ENCODE measurements at regions of chr13 and their contacts with region 1.

Region 1: GRCh38 chr13:49110122-49110912 is 109.8 kb upstream of the MLNR start:
- DNase-seq: peak; percentile 81 to 93 (median 84)
- ATAC-seq: peak; percentile 81 to 89 (median 82)
- H3K4me3 ChIP-seq: peak overlapping the region; percentile 15 to 75 (median 63)
- H3K27ac ChIP-seq: peak overlapping the region; percentile 3 to 79 (median 50)
- H3K4me1 ChIP-seq: peaks cover 3 to 58% (median 30%) of the 10 kb centered on the region in 12 donors
- H3K27me3 ChIP-seq: no peaks in the 10 kb centered on the region
- CTCF ChIP-seq: no peak
- POLR2A ChIP-seq: no peak

Region 2: GRCh38 chr13:48585456-48585840 is 524.9 kb before region 1 on chr13:
- intact Hi-C with region 1: no loop called
- DNase-seq: peak in 2 of 5 donors; percentile 28 to 46
- ATAC-seq: peak; percentile 50 to 80 (median 73)
- H3K4me3 ChIP-seq: no peak overlapping the region
- H3K27ac ChIP-seq: peak overlapping the region in 11 of 12 donors; percentile 12 to 63 (median 43)
- H3K4me1 ChIP-seq: peaks cover 0 to 42% (median 30%) of the 10 kb centered on the region in 12 donors
- H3K27me3 ChIP-seq: no peaks in the 10 kb centered on the region
- CTCF ChIP-seq: no peak
- POLR2A ChIP-seq: no peak

Region 3: GRCh38 chr13:49256841-49257240 is 146.5 kb after region 1 on chr13:
- intact Hi-C with region 1: loop called in 2 of 10 experiments (anchors 10 kb)
- DNase-seq: no peak
- ATAC-seq: no peak
- H3K4me3 ChIP-seq: no peak overlapping the region
- H3K27ac ChIP-seq: peak overlapping the region in 1 of 12 donors; percentile 9
- H3K4me1 ChIP-seq: peaks cover 0 to 24% (median 0%) of the 10 kb centered on the region in 12 donors
- H3K27me3 ChIP-seq: no peaks in the 10 kb centered on the region
- CTCF ChIP-seq: no peak
- POLR2A ChIP-seq: no peak

Region 4: DNA sequence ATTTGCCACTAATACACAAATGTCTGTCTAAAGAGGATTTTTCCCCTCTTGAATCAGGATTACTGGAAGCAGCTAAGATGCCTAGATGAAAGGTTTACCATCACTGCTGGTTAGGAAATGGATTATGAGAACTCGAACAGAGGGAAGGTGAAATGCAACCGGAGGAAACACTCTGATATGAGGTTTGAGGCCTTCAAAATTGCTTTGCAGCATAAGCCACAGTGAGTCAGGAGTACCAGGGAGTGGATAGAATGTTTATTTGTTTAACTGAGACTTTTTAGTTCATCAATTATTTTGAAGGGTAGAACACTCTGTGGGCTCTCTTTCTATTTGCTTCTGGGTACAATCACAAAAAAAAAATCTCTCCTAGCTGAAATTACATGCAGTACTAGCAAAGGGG is 155.5 kb after region 1 on chr13:
- intact Hi-C with region 1: loop called in 1 of 10 experiments (anchors 10 kb)
- DNase-seq: no peak
- ATAC-seq: no peak
- H3K4me3 ChIP-seq: no peak overlapping the region
- H3K27ac ChIP-seq: no peak overlapping the region
- H3K4me1 ChIP-seq: no peaks in the 10 kb centered on the region
- H3K27me3 ChIP-seq: no peaks in the 10 kb centered on the region
- CTCF ChIP-seq: no peak
- POLR2A ChIP-seq: no peak

Region 5: DNA sequence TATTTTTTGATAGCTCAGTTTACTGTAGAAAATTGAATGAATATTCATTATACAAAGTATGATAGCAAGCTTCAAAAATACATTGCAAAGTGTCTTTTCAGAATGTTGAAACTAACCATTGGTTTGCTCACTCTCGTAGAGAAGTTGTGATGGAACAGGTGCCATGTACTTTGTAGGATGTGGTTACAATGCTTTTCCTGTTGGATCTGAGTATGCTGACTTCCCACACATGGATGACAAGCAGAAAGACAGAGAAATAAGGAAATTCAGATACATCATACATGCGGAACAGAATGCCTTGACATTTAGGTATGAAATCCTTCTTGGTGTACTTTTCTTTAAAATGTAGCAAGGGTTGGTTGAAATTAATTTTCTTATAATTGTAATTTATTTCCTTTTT is 167.9 kb after region 1 on chr13:
- intact Hi-C with region 1: loop called in 2 of 10 experiments (anchors 5 to 10 kb)
- DNase-seq: no peak
- ATAC-seq: no peak
- H3K4me3 ChIP-seq: no peak overlapping the region
- H3K27ac ChIP-seq: no peak overlapping the region
- H3K4me1 ChIP-seq: no peaks in the 10 kb centered on the region
- H3K27me3 ChIP-seq: no peaks in the 10 kb centered on the region
- CTCF ChIP-seq: no peak
- POLR2A ChIP-seq: no peak

Region 6: DNA sequence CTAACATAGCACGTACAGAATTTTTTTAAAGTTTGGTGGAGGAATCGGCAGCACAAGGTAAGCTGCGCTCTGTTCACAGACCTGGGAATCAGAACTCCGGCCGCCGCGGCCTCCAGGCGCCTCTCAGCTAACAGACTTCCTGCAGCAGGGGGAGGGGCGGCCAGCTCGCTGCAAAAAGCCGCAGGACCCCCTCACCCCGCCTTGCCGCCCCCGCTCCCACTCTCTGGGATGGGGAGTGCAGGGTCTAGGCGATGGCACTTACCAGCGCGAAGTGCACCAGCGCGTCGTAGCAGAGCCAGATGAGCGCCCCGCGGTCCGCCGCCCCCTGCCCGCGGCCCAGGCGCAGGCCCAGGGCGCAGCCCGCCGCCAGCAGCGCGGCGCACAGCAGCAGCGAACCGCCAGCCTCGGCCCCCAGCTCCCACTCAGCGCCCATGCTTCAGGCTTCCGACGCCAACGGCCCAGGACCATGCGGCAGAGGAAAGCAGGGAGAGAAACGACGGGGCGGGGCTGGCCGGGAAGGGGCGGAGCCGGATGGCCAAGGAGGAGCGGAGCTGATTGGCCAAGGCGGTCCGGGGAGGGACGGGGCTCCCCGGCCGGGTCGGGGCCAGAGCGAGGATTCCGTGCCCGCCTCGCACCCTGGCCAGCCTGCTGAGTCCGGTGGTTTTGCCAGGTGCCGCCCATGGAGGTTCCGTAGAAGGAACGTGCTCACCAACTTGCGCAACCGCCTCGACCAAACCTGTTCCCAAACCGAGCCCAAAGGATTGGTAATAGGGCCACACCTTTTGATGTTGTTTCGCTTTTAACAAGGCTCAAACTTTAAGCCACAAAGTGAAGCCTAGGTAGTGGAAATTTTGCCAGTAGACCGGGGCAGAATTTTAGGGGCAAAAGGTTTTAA is 580.9 kb after region 1 on chr13 and contains the start of gene EBPL:
- intact Hi-C with region 1: no loop called
- DNase-seq: peak; percentile 91 to 96 (median 94)
- ATAC-seq: peak; percentile 96 to 100 (median 100)
- H3K4me3 ChIP-seq: peak within 1 kb of the TSS; percentile 18 to 97 (median 74)
- H3K27ac ChIP-seq: peak within 1 kb of the TSS; percentile 17 to 90 (median 76)
- H3K4me1 ChIP-seq: peaks cover 0 to 15% (median 6%) of the 10 kb centered on the region in 12 donors
- H3K27me3 ChIP-seq: no peaks in the 10 kb centered on the region
- CTCF ChIP-seq: peak in 2 of 12 donors; percentile 8 to 11
- POLR2A ChIP-seq: peak in 1 of 2 donors; percentile 23
- total RNA-seq, gene EBPL: 3.2 to 13.8 (median 5.8) TPM

Measured in heart left ventricle (tissue), 16 donors.